Dendritic cell treated with granulocyte-macrophage colony-stimulating factor and Interleukin-4, amounts not matched to agents 40 ng/mL and 50 ng/mL, for 4 days (primary cell): ENCODE measurements at regions of chrX and their contacts with region 1.

Region 1: DNA sequence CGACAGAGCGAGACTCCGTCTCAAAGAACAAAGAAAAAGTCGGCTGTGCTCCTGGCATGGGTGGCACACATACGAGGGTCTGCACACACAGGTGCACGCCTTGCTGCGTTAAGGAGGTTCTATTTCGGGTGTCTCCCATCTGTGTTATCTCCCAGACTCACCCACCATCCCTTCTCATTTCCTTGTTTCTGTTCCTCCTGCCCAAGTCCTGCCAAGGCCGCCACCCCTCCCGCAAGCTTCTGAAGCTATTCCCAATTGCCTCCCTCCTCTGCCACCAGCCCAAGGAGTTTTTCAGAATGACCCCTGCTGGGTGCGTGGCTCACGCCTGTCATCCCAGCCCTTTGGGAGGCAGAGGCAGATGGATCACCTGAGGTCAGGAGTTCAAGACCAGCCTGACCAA is 6.0 kb upstream of the IL3RA start:
- H3K4me3 Mint-ChIP-seq: peak overlapping the region; percentile 22
- H3K27ac Mint-ChIP-seq: peak overlapping the region; percentile 85
- H3K4me1 Mint-ChIP-seq: peaks cover 57% of the 10 kb centered on the region
- H3K27me3 Mint-ChIP-seq: peaks cover 2% of the 10 kb centered on the region

Region 2: DNA sequence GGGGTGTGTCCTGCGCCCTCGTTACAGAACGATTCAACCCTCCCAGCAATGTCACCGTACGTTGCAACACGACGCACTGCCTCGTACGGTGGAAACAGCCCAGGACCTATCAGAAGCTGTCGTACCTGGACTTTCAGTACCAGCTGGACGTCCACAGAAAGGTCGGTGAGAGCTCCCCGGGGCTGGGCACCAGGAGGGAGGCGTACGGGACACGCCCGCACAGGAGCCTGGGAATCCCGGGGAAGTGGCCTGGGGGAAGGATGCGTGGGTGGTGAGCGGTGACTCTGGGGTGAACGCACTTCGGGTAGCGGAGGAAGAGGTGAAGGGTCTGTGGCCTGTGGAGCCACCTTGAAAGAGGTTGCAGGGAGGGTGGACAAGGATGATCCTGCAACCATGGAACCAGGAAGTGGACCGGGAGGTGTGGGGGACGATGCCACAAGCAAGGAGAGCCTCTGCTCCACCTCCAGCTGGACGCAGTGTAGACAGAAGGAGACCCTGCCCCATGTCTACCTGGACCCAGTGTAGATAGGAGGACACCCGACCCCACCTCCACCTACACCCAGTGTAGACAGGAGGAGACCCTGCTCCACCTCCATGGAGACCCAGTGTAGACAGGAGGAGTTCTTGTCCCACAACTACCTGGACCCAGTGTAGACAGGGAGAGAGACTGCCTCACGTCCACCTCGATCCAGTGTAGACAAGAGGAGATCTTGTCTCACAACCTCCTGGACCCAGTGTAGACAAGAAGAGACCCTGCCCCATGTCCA is 36.1 kb before region 1 on chrX:
- intact Hi-C with region 1: no loop called
- H3K4me3 Mint-ChIP-seq: no peak overlapping the region
- H3K27ac Mint-ChIP-seq: peak overlapping the region; percentile 3
- H3K4me1 Mint-ChIP-seq: peaks cover 49% of the 10 kb centered on the region
- H3K27me3 Mint-ChIP-seq: no peaks in the 10 kb centered on the region

Region 3: GRCh38 chrX:1391707-1392375 is 61.2 kb after region 1 on chrX and contains the start of gene SLC25A6:
- intact Hi-C with region 1: loop called (anchors 5 kb)
- H3K4me3 Mint-ChIP-seq: peak within 1 kb of the TSS; percentile 97
- H3K27ac Mint-ChIP-seq: peak within 1 kb of the TSS; percentile 99
- H3K4me1 Mint-ChIP-seq: peaks cover 72% of the 10 kb centered on the region
- H3K27me3 Mint-ChIP-seq: no peaks in the 10 kb centered on the region